ENCODE measurements at regions of chr4 and their contacts with region 1.

Region 1: DNA sequence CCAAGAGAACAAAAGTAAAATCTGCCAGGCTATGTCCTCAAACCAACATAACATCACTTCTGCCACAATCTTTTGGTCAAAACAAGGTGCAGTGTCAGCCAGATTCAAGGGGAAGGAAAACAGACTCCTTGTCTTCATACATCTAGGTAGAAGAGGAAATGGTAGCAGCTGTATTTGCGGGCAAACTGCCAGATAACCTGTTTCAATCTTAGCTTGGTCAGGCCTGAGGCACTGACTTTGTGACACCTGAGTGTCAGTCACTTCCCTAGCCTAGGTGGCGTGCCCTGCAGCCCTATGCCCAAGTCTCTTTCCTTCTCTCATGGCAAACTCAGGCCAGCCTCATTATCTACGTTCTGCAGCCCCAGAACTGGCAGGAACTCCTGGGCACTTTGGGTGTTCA is 146.2 kb upstream of the JADE1 start:
- DNase-seq: no peak
- H3K4me3 ChIP-seq: no peak overlapping the region
- H3K27ac ChIP-seq: no peak overlapping the region
- H3K4me1 ChIP-seq: peaks cover 0 to 50% (median 40%) of the 10 kb centered on the region in 4 donors
- H3K27me3 ChIP-seq: no peaks in the 10 kb centered on the region
- CTCF ChIP-seq: no peak
- EP300 ChIP-seq: no peak
- POLR2A ChIP-seq: no peak

Region 2: GRCh38 chr4:128565565-128566186 is 97.7 kb before region 1 on chr4:
- intact Hi-C with region 1: loop called (anchors 5 kb)
- DNase-seq: peak; percentile 72
- H3K4me3 ChIP-seq: no peak overlapping the region
- H3K27ac ChIP-seq: no peak overlapping the region
- H3K4me1 ChIP-seq: peaks cover 0 to 32% (median 20%) of the 10 kb centered on the region in 4 donors
- H3K27me3 ChIP-seq: no peaks in the 10 kb centered on the region
- CTCF ChIP-seq: peak; percentile 22 to 68 (median 62)
- EP300 ChIP-seq: no peak
- POLR2A ChIP-seq: no peak

Measured in sigmoid colon (tissue), 7 donors.